BJ (cell line): ENCODE measurements at regions of chr6 and their contacts with region 1.

Region 1: GRCh38 chr6:70557998-70558397 is 8.7 kb upstream of the SDHAF4 start:
- DNase-seq: no peak
- H3K4me3 ChIP-seq: no peak overlapping the region
- H3K27me3 ChIP-seq: no peaks in the 10 kb centered on the region
- CTCF ChIP-seq: no peak

Region 2: GRCh38 chr6:70547313-70547712 is 10.7 kb before region 1 on chr6:
- CTCF ChIA-PET with region 1: interaction called, 11 read pairs
- POLR2A ChIA-PET with region 1: no interaction called
- DNase-seq: no peak
- H3K4me3 ChIP-seq: no peak overlapping the region
- H3K27me3 ChIP-seq: no peaks in the 10 kb centered on the region
- CTCF ChIP-seq: peak; percentile 59